Colonic mucosa (tissue), 4 donors: ENCODE measurements at regions of chr12 and their contacts with region 1.

Region 1: DNA sequence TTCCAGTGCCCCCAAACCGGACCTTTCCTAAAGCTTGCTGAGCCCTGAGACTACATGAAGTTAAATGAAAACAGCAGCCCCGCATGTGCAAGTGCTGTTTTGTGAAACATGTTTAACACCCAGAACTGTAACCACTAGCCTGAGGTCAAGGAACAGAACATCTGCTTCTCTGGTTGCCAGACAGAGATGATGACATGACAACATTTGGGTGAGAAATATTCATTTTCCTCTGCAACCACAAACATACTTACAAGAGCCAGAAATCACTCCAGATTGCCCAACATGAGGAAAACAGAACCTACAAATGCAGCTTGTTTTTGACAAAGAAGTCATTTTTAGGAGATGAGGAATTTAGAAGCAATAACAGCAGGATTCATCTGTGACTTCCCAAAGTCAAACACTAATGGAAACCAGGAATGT is 110.4 kb downstream of the BCAT1 start:
- DNase-seq: peak; percentile 26
- H3K4me3 ChIP-seq: no peak overlapping the region
- H3K27ac ChIP-seq: no peak overlapping the region
- H3K4me1 ChIP-seq: no peaks in the 10 kb centered on the region
- H3K27me3 ChIP-seq: no peaks in the 10 kb centered on the region
- CTCF ChIP-seq: no peak

Region 2: DNA sequence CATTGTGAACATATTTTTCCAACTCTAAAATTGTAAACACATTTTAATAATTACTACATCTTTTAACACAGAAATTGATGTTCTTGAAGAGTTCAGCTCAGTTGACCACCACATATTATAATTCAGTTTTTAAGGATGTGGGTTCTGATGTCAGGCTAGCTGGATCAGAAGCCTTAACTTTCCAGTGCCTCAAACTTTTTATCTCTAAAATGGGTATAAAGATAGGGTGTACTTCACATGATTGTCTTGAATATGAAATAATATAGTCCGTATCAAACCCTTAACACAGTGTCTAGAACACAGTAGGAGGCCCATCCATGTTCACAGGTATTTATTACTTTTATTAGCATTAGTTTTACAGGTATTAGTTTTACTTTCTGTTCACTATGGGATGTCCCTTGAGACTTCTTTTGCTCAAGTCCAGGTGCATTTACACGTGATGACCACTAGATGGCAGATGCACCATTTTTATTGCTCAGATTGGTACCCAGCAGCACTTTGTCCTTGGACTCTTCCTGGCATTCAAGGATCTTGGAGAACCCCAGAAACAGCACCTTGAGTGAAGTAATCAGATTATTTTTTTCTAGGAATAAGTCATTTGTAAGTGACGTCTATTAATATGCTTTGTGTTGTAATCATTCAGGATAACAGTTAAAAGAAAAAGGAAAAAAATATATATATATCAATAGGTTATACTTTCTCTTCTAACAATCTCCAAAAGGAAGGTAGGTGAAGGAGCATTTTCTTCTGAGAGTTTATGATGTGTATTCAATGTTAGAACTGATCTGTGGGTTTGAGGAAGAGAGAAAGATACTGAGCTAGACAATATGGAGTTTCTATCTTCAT is 1633.4 kb before region 1 on chr12:
- intact Hi-C with region 1: loop called (anchors 5 kb)
- DNase-seq: no peak
- H3K4me3 ChIP-seq: no peak overlapping the region
- H3K27ac ChIP-seq: no peak overlapping the region
- H3K4me1 ChIP-seq: no peaks in the 10 kb centered on the region
- H3K27me3 ChIP-seq: no peaks in the 10 kb centered on the region
- CTCF ChIP-seq: peak; percentile 86